GM12878 (cell line): ENCODE measurements at regions of chr1 and their contacts with region 1.

Region 1: GRCh38 chr1:156705918-156706656 is 704 bp upstream of the CRABP2 start:
- DNase-seq: no peak
- ATAC-seq: peak; percentile 81
- H3K4me3 ChIP-seq: peak overlapping the region; percentile 35; the same call in 1 of the 2 replicates
- H3K27ac ChIP-seq: no peak overlapping the region
- H3K4me1 ChIP-seq: peaks cover 6% of the 10 kb centered on the region
- H3K27me3 ChIP-seq: peaks cover 10 to 15% of the 10 kb centered on the region in 2 experiments
- CTCF ChIP-seq: peak; percentile 60 to 74 (median 67)
- EP300 ChIP-seq: no peak
- POLR2A ChIP-seq: peak; percentile 11; the same call in 1 of the 2 replicates
- RAD21 ChIP-seq: peak; percentile 53

Region 2: GRCh38 chr1:156583821-156584622 is 122.1 kb before region 1 on chr1:
- CTCF ChIA-PET with region 1: no interaction called
- POLR2A ChIA-PET with region 1: no interaction called
- RAD21 ChIA-PET with region 1: no interaction called
- SMC1A ChIA-PET with region 1: no interaction called
- in situ Hi-C with region 1: no loop called
- intact Hi-C with region 1: no loop called
- DNase-seq: no peak
- ATAC-seq: peak; percentile 83
- H3K4me3 ChIP-seq: no peak overlapping the region
- H3K27ac ChIP-seq: no peak overlapping the region
- H3K4me1 ChIP-seq: peaks cover 16% of the 10 kb centered on the region
- H3K27me3 ChIP-seq: no peaks in the 10 kb centered on the region; a peak in 1 of 4 replicates
- CTCF ChIP-seq: peak; percentile 88 to 93 (median 89)
- EP300 ChIP-seq: no peak
- POLR2A ChIP-seq: no peak
- RAD21 ChIP-seq: peak; percentile 87

Region 3: DNA sequence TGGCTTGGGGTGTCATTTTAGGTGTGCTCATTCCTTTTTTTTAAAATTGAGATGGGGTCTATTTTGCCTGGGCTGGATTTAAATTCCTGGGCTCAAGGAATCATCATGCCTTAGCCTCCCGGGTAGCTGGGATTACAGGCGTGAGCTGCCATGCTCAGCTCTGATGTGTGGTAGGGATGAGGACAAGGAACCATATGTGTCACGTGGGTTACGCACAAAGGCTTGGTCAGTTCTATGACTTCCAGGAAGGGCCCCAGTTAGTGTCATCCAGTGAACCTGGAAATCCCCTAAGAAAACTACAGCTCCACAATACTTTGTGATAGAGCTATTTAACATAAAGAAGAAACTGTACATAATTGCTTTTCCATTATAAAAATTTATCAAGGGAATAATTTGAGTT is 15.4 kb after region 1 on chr1:
- CTCF ChIA-PET with region 1: interaction called, 53 read pairs
- POLR2A ChIA-PET with region 1: interaction called, 3 read pairs
- RAD21 ChIA-PET with region 1: interaction called, 15 read pairs
- SMC1A ChIA-PET with region 1: interaction called, 8 read pairs
- in situ Hi-C with region 1: no loop called
- intact Hi-C with region 1: no loop called
- DNase-seq: no peak
- ATAC-seq: peak; percentile 58
- H3K4me3 ChIP-seq: no peak overlapping the region
- H3K27ac ChIP-seq: peak overlapping the region; percentile 72
- H3K4me1 ChIP-seq: peaks cover 16% of the 10 kb centered on the region
- H3K27me3 ChIP-seq: no peaks in the 10 kb centered on the region
- CTCF ChIP-seq: no peak
- EP300 ChIP-seq: no peak
- POLR2A ChIP-seq: no peak
- RAD21 ChIP-seq: no peak